Naive thymus-derived CD4-positive, alpha-beta T cell (primary cell): ENCODE measurements at regions of chr3 and their contacts with region 1.

Region 1: DNA sequence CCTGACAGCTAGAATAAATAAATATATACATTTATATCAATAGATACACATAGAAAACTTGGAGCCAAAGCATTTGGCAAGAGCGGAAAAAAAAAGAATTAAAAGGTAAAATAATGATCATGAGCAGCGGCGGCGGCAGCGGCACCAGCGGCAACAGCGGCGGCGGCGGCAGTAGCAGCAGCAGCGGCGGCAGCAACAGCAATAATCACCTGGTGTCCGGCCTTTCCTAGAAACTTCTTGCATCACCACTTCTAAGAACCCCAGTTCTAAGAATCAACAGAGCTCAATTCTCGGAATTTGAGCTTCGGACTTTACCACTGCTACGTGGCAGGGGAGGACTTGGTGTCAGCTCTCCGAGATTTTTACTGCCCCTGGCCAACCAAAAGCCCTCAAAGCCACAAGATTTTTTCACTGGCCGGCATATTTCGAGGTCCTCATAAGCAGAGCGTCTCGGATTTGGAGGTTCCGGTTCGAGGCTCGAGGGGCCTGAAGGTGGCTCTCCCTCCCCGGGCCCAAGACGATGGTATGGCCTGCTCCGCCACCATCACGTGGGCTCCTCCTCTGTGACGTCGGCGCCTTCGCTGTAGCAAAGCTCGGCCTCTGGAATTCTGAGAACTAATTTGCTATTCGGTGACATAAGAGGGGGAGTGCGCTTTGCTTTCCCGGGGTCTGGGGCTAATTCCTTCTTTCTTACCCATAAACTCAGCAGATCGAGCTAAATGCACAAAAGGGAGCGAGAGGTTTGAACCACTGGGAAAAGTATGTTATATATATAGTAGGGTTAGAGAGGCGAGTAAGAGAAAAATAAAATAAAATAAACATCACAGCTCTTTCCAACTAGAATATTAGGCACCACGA is at the start of gene BCL6:
- DNase-seq: peak; percentile 84 to 97 (median 94)
- ATAC-seq: peak; percentile 79
- H3K4me3 ChIP-seq: peak within 1 kb of the TSS; percentile 95
- H3K4me3 Mint-ChIP-seq: peak within 1 kb of the TSS; percentile 86 to 100 (median 98)
- H3K27ac ChIP-seq: peak within 1 kb of the TSS; percentile 96
- H3K27ac Mint-ChIP-seq: peak within 1 kb of the TSS; percentile 99 to 100 (median 100)
- H3K4me1 ChIP-seq: peaks cover 19 to 34% of the 10 kb centered on the region in 2 donors
- H3K4me1 Mint-ChIP-seq: peaks cover 30 to 77% (median 75%) of the 10 kb centered on the region in 7 donors
- H3K27me3 ChIP-seq: no peaks in the 10 kb centered on the region
- H3K27me3 Mint-ChIP-seq: peaks cover 0 to 16% (median 0%) of the 10 kb centered on the region in 5 donors
- total RNA-seq, gene BCL6: 13.4 to 154 (median 29.5) TPM

Region 2: GRCh38 chr3:187802928-187803259 is 57.5 kb after region 1 on chr3:
- CTCF ChIA-PET with region 1: no interaction called
- POLR2A ChIA-PET with region 1: no interaction called
- intact Hi-C with region 1: loop called (anchors 1 to 2 kb)
- DNase-seq: peak in 1 of 9 donors; percentile 66
- ATAC-seq: peak; percentile 56
- H3K4me3 ChIP-seq: no peak overlapping the region
- H3K4me3 Mint-ChIP-seq: peak overlapping the region in 6 of 10 donors; percentile 14 to 69 (median 34)
- H3K27ac ChIP-seq: no peak overlapping the region
- H3K27ac Mint-ChIP-seq: peak overlapping the region in 1 of 9 donors; percentile 90
- H3K4me1 ChIP-seq: peaks cover 22 to 47% of the 10 kb centered on the region in 2 donors
- H3K4me1 Mint-ChIP-seq: peaks cover 23 to 93% (median 44%) of the 10 kb centered on the region in 7 donors
- H3K27me3 ChIP-seq: no peaks in the 10 kb centered on the region
- H3K27me3 Mint-ChIP-seq: no peaks in the 10 kb centered on the region

Region 3: DNA sequence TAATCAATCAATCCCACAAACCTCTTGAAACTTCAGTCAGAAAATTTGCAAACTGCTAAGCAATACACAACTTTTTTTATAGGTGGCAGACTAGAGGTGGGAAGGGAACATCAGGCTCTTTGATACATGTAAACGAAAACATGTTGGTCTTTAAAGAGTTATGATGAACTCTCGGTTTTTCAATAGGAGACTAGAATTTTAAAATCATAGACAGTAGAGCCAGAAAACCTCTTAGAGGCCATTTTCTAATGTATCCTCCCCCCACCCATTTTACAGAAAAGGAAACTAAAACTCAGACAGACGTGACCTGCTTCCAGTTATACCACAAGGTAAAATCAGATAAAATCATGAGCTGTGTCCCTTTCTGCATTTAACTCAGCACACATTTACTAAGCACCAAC is 229.4 kb after region 1 on chr3:
- CTCF ChIA-PET with region 1: interaction called, 5 read pairs
- POLR2A ChIA-PET with region 1: interaction called, 3 read pairs
- intact Hi-C with region 1: loop called (anchors 1 kb)
- DNase-seq: peak in 6 of 9 donors; percentile 8 to 42 (median 32)
- ATAC-seq: peak; percentile 67
- H3K4me3 ChIP-seq: peak overlapping the region; percentile 3
- H3K4me3 Mint-ChIP-seq: peak overlapping the region; percentile 41 to 85 (median 76)
- H3K27ac ChIP-seq: no peak overlapping the region
- H3K27ac Mint-ChIP-seq: peak overlapping the region; percentile 44 to 96 (median 80)
- H3K4me1 ChIP-seq: peaks cover 36 to 40% of the 10 kb centered on the region in 2 donors
- H3K4me1 Mint-ChIP-seq: peaks cover 31 to 71% (median 49%) of the 10 kb centered on the region in 7 donors
- H3K27me3 ChIP-seq: no peaks in the 10 kb centered on the region
- H3K27me3 Mint-ChIP-seq: no peaks in the 10 kb centered on the region

Region 4: GRCh38 chr3:188061133-188061532 is 315.7 kb after region 1 on chr3:
- CTCF ChIA-PET with region 1: interaction called, 11 read pairs
- POLR2A ChIA-PET with region 1: no interaction called
- intact Hi-C with region 1: loop called (anchors 2 kb)
- DNase-seq: peak in 6 of 9 donors; percentile 4 to 60 (median 11)
- ATAC-seq: peak; percentile 86
- H3K4me3 ChIP-seq: no peak overlapping the region
- H3K4me3 Mint-ChIP-seq: peak overlapping the region in 1 of 10 donors; percentile 62
- H3K27ac ChIP-seq: no peak overlapping the region
- H3K27ac Mint-ChIP-seq: peak overlapping the region in 4 of 9 donors; percentile 19 to 74 (median 31)
- H3K4me1 ChIP-seq: peaks cover 3 to 8% of the 10 kb centered on the region in 2 donors
- H3K4me1 Mint-ChIP-seq: peaks cover 0 to 25% (median 13%) of the 10 kb centered on the region in 7 donors
- H3K27me3 ChIP-seq: no peaks in the 10 kb centered on the region
- H3K27me3 Mint-ChIP-seq: no peaks in the 10 kb centered on the region

Region 5: DNA sequence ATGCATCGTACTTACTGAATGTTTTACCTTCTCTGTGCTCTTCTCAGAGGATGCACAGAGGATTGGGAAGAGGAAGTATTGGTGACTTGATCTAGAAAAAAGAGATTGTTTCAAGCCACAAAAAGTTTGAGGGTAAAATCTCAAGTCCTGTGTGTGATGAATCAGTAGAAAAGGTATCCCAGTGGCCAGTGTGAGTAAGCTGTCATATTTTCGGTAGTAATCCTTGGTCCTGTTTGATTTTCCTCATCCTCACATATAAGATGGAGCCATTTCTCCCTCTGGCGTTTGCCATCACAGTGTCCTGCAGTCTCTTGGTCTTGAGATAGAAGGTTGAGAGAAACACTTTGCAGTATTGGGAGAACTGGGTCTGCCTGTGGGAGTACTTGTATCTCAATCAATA is 575.3 kb after region 1 on chr3:
- CTCF ChIA-PET with region 1: interaction called, 5 read pairs
- POLR2A ChIA-PET with region 1: no interaction called
- intact Hi-C with region 1: loop called (anchors 1 to 2 kb)
- DNase-seq: no peak
- ATAC-seq: no peak
- H3K4me3 ChIP-seq: no peak overlapping the region
- H3K4me3 Mint-ChIP-seq: peak overlapping the region in 1 of 10 donors; percentile 37
- H3K27ac ChIP-seq: no peak overlapping the region
- H3K27ac Mint-ChIP-seq: peak overlapping the region in 2 of 9 donors; percentile 11 to 59
- H3K4me1 ChIP-seq: peaks cover 19 to 26% of the 10 kb centered on the region in 2 donors
- H3K4me1 Mint-ChIP-seq: peaks cover 34 to 67% (median 55%) of the 10 kb centered on the region in 7 donors
- H3K27me3 ChIP-seq: no peaks in the 10 kb centered on the region
- H3K27me3 Mint-ChIP-seq: peaks cover 0 to 6% (median 0%) of the 10 kb centered on the region in 5 donors

Region 6: DNA sequence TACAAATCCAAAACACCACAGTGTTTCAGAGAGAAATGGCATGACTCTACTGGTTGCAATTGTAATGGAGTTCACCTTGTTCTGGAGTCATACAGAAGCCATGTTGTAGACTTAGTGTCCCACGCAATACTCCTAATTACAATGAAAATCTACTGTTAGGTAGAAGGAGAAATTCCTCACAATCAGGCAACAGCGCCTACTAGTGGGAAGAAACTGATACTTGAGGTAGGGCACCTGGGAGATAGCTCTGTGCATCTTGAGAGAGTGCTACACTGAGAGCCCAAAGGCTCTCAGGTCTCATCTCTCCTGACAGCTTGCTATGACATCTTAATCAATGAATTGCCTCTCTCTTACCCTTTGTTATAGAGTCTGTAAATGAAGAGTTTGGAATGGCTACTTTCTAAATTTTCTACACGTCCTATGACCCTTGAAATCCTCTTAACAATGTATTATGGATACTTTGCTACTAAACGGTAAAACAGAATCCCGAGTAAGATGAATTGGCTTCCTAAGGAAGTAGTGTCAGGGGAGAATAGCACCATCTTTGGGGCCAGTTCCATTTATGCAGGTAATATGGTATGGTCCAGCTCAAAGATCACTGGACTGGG is 1003.7 kb after region 1 on chr3:
- CTCF ChIA-PET with region 1: interaction called, 52 read pairs
- POLR2A ChIA-PET with region 1: interaction called, 14 read pairs
- intact Hi-C with region 1: loop called (anchors 1 kb)
- DNase-seq: peak in 8 of 9 donors; percentile 25 to 62 (median 46)
- ATAC-seq: peak; percentile 82
- H3K4me3 ChIP-seq: no peak overlapping the region
- H3K4me3 Mint-ChIP-seq: no peak overlapping the region
- H3K27ac ChIP-seq: no peak overlapping the region
- H3K27ac Mint-ChIP-seq: no peak overlapping the region
- H3K4me1 ChIP-seq: no peaks in the 10 kb centered on the region
- H3K4me1 Mint-ChIP-seq: peaks cover 0 to 17% (median 0%) of the 10 kb centered on the region in 7 donors
- H3K27me3 ChIP-seq: no peaks in the 10 kb centered on the region
- H3K27me3 Mint-ChIP-seq: no peaks in the 10 kb centered on the region